Prostate gland (tissue), 2 donors: ENCODE measurements at regions of chr15 and their contacts with region 1.

Region 1: DNA sequence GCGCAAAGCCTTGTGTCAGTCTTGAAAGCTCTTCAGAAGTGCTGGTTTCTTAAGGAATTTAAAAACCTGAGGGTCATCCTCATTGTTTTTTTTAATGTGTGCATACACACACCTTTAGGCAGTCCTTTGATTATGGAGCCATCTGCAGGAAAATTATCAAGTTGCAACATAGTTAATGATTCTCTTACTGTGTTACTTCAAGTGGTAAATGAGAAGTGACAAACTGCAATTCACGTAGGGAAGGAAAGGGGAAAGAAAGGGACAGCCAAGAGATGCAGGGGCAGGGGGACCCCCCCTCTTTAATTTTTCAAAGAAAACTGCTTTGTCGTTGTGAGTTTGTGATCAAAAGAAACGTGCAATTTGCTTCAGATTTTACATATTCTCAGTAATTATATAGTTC is 162.4 kb upstream of the CGNL1 start:
- DNase-seq: peak; percentile 17
- H3K4me3 ChIP-seq: no peak overlapping the region
- H3K27ac ChIP-seq: no peak overlapping the region
- H3K4me1 ChIP-seq: no peaks in the 10 kb centered on the region
- H3K27me3 ChIP-seq: no peaks in the 10 kb centered on the region
- CTCF ChIP-seq: peak; percentile 19 to 67 (median 52)
- POLR2A ChIP-seq: no peak

Region 2: DNA sequence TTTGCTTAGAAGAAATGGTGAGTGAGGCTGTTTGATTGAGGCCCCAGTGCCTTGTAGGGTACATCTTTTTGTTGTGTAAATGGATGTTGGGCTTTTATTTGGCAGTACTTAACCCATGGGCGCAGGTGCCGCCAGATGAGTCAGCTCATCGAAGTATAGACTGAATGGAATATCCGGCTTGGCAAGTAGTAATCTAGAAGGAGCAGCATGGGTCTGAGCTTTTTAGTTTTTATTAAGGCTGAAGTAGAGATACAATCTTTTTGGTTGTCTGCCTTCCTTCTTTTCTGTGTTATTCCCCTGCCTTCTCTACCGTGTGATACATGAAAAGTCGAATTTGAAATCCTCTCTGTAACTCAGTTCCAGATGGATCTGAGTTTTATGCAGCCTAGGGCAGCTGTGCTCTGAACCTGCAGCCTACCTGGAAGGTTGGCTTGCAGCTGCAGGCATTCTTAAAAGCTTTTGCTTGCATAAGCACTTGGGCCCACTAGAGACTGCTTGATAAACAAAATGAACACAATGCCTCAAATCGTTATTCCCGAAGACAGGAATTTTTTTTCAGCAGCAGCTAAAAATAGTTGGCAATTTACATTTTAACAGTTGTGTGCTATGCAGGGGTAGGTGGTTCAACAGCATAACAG is 15.1 kb before region 1 on chr15:
- intact Hi-C with region 1: no loop called
- DNase-seq: peak; percentile 25
- H3K4me3 ChIP-seq: peak overlapping the region in 1 of 2 donors; percentile 6
- H3K27ac ChIP-seq: peak overlapping the region in 1 of 2 donors; percentile 26
- H3K4me1 ChIP-seq: peaks cover 3% of the 10 kb centered on the region
- H3K27me3 ChIP-seq: no peaks in the 10 kb centered on the region
- CTCF ChIP-seq: no peak
- POLR2A ChIP-seq: no peak

Region 3: GRCh38 chr15:57306161-57306943 is 92.5 kb after region 1 on chr15:
- intact Hi-C with region 1: loop called (anchors 10 kb)
- DNase-seq: peak; percentile 78
- H3K4me3 ChIP-seq: peak overlapping the region; percentile 30 to 34
- H3K27ac ChIP-seq: peak overlapping the region; percentile 65 to 79
- H3K4me1 ChIP-seq: peaks cover 10% of the 10 kb centered on the region
- H3K27me3 ChIP-seq: no peaks in the 10 kb centered on the region
- CTCF ChIP-seq: peak; percentile 63 to 83 (median 74)
- POLR2A ChIP-seq: no peak

Region 4: DNA sequence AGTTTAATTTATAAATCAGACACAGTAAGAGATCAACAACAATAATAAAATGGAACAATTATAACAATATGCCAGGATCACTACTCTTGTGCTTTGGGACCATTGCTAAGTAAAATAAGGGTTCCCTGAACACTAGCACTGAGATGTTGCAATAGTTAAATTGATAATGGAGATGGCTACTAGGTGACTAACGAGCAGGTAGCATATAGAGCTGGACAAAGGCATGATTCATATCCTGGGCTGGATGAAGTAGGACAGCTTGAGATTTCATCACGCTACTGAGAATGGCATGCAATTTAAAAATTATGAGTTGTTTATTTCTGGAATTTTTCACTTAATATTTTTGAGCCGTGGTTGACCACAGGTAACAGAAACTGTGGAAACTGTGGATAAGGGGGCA is 357.1 kb after region 1 on chr15:
- intact Hi-C with region 1: no loop called
- DNase-seq: no peak
- H3K4me3 ChIP-seq: no peak overlapping the region
- H3K27ac ChIP-seq: no peak overlapping the region
- H3K4me1 ChIP-seq: no peaks in the 10 kb centered on the region
- H3K27me3 ChIP-seq: no peaks in the 10 kb centered on the region
- CTCF ChIP-seq: no peak
- POLR2A ChIP-seq: no peak